ENCODE measurements at regions of chr14 and their contacts with region 1.

Region 1: GRCh38 chr14:95527387-95528002 is 7.4 kb upstream of the GLRX5 start:
- DNase-seq: peak in 9 of 14 experiments; percentile 36 to 72 (median 48)
- ATAC-seq: no peak
- H3K4me3 ChIP-seq: no peak overlapping the region
- H3K4me3 Mint-ChIP-seq: no peak overlapping the region
- H3K27ac ChIP-seq: no peak overlapping the region
- H3K27ac Mint-ChIP-seq: peak overlapping the region; percentile 31
- H3K4me1 ChIP-seq: peaks cover 41% of the 10 kb centered on the region
- H3K4me1 Mint-ChIP-seq: peaks cover 63% of the 10 kb centered on the region
- H3K27me3 ChIP-seq: no peaks in the 10 kb centered on the region
- H3K27me3 Mint-ChIP-seq: no peaks in the 10 kb centered on the region
- CTCF ChIP-seq: peak; percentile 93

Region 2: GRCh38 chr14:95248432-95248831 is 279.1 kb before region 1 on chr14:
- CTCF ChIA-PET with region 1: no interaction called
- POLR2A ChIA-PET with region 1: no interaction called
- intact Hi-C with region 1: no loop called
- DNase-seq: no peak
- ATAC-seq: no peak
- H3K4me3 ChIP-seq: no peak overlapping the region
- H3K4me3 Mint-ChIP-seq: no peak overlapping the region
- H3K27ac ChIP-seq: no peak overlapping the region
- H3K27ac Mint-ChIP-seq: no peak overlapping the region
- H3K4me1 ChIP-seq: no peaks in the 10 kb centered on the region
- H3K4me1 Mint-ChIP-seq: no peaks in the 10 kb centered on the region
- H3K27me3 ChIP-seq: no peaks in the 10 kb centered on the region
- H3K27me3 Mint-ChIP-seq: peaks cover 6% of the 10 kb centered on the region
- CTCF ChIP-seq: no peak

Region 3: GRCh38 chr14:95483309-95484165 is 44.0 kb before region 1 on chr14:
- CTCF ChIA-PET with region 1: interaction called, 11 read pairs
- POLR2A ChIA-PET with region 1: interaction called, 4 read pairs
- intact Hi-C with region 1: no loop called
- DNase-seq: no peak
- ATAC-seq: no peak
- H3K4me3 ChIP-seq: no peak overlapping the region
- H3K4me3 Mint-ChIP-seq: no peak overlapping the region
- H3K27ac ChIP-seq: peak overlapping the region in 1 of 2 donors; percentile 21
- H3K27ac Mint-ChIP-seq: peak overlapping the region; percentile 66
- H3K4me1 ChIP-seq: peaks cover 52% of the 10 kb centered on the region
- H3K4me1 Mint-ChIP-seq: peaks cover 68% of the 10 kb centered on the region
- H3K27me3 ChIP-seq: no peaks in the 10 kb centered on the region
- H3K27me3 Mint-ChIP-seq: no peaks in the 10 kb centered on the region
- CTCF ChIP-seq: no peak

Region 4: GRCh38 chr14:95507701-95508103 is 19.8 kb before region 1 on chr14:
- CTCF ChIA-PET with region 1: interaction called, 11 read pairs
- POLR2A ChIA-PET with region 1: interaction called, 4 read pairs
- intact Hi-C with region 1: no loop called
- DNase-seq: peak in 3 of 14 experiments; percentile 39 to 44 (median 41)
- ATAC-seq: no peak
- H3K4me3 ChIP-seq: no peak overlapping the region
- H3K4me3 Mint-ChIP-seq: no peak overlapping the region
- H3K27ac ChIP-seq: peak overlapping the region in 1 of 2 donors; percentile 7
- H3K27ac Mint-ChIP-seq: peak overlapping the region; percentile 43
- H3K4me1 ChIP-seq: peaks cover 72% of the 10 kb centered on the region
- H3K4me1 Mint-ChIP-seq: peaks cover 57% of the 10 kb centered on the region
- H3K27me3 ChIP-seq: no peaks in the 10 kb centered on the region
- H3K27me3 Mint-ChIP-seq: no peaks in the 10 kb centered on the region
- CTCF ChIP-seq: no peak